ENCODE measurements at regions of chr22 and their contacts with region 1.

Region 1: DNA sequence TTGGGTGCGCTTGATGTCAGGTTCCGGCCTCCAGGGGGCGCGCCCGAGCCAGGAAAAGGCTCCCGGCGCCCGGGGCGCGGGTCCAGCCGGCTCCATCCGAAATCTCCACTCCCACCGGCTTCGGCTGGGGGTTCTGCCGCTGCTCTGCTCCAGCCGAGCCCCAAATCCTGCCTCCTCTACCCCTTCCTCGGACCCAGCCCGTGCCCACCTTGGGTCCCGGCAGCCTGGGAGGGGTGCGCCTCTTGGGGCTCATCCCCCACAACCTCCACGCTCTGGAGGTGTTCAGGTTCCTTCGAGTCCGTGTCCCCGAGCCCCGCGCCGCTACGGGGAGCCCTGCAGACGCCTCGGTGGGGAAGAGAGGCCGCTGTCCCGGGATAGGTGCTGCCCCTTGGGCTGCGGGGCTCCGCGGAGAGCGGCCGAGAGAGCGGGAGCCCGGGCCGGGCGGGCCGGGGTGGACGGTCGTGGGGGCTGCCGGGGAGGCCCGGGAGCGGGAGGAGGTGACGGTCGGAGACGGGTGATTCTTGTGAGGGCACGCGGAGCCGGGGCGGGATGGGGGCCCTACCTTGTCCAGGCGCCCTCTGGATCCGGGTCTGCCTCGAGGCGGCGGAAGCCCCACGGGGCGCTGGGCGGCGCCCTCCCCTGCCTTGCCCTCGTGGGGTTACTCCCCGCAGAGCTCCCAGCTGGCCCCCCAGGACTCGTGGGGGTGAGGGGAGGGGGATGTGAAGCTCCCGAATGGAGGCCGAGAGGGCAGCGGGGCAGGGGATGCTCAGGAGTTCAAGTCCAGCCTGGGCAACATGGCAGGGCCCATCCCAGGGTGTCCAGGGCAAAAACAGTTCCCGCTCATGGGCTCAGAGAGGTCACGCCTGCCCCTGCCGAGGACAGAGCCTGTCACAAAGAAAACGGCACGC is 13.2 kb upstream of the CYB5R3 start:
- DNase-seq: peak; percentile 91
- H3K4me3 ChIP-seq: peak overlapping the region; percentile 50
- H3K27ac ChIP-seq: no peak overlapping the region
- H3K4me1 ChIP-seq: no peaks in the 10 kb centered on the region
- H3K27me3 ChIP-seq: no peaks in the 10 kb centered on the region
- CTCF ChIP-seq: peak; percentile 69

Region 2: DNA sequence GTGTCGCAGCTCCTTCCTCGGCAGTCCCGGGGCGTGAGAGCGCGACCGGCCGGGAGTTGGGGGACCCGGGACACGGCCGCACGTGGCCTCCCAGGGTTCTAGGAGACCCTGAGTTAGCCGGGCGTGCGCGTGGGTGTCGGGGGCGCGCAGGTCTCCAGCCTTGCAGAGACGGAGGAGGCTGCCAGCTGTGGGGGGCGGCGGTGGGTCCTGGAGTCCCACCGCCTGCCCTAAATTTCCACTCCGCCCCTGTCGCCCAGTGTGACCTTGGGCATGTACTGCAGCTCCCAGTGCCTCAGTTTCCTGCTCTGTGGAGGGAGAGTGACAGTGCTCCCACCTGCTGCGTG is 161.6 kb before region 1 on chr22:
- intact Hi-C with region 1: no loop called
- DNase-seq: no peak
- H3K4me3 ChIP-seq: peak overlapping the region; percentile 37
- H3K27ac ChIP-seq: no peak overlapping the region
- H3K4me1 ChIP-seq: no peaks in the 10 kb centered on the region
- H3K27me3 ChIP-seq: no peaks in the 10 kb centered on the region
- CTCF ChIP-seq: no peak

Region 3: DNA sequence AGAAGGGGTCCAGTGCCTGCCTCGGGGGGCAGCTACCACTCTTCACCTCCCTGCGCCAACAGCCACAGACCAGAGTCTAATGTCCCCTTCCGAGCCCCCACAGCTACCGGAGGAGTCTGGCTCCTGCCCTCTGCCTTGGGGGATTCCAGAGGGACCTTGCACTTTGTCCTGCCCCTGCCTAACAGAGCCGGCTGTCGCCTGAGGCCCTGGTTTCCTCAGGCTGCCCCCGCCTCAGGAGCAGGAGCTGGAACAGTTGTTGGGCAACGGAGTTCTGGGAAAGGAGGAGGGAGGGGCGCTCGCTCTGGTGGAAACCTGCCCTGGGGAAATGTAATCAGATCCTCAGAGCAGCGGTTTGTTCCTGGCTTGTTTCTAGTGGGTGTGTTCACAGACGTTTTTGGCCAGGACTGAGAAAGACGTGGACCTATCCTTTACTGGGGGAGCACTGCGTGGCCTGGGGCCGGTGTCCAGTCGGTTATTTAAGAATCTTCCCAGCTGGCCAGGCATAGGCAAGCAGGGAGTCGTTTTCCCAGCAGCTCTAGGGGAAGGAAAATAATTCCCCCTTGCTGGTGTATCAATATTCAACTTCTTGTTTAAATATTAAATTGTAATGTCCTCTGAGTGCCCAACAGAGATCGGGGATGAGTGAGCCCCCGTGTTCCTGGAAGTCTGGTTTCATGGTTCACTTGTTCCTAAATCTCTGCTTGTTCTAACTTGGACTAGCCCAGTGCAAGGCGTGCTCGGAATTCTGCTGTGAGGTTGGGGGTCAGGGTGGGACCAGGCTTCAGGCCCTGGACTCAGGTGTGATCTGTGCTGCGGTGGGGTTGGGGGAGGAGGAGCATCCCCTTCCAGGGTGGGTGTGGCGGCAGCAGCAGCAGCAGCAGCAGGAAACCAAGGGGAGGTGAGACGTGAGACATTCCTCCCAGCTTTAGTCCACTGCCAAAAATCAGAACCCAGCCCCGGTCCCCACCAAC is 26.2 kb after region 1 on chr22:
- intact Hi-C with region 1: no loop called
- DNase-seq: peak; percentile 73
- H3K4me3 ChIP-seq: no peak overlapping the region
- H3K27ac ChIP-seq: peak overlapping the region; percentile 60
- H3K4me1 ChIP-seq: peaks cover 5% of the 10 kb centered on the region
- H3K27me3 ChIP-seq: no peaks in the 10 kb centered on the region
- CTCF ChIP-seq: no peak

Region 4: GRCh38 chr22:42769574-42770447 is 107.4 kb after region 1 on chr22:
- intact Hi-C with region 1: loop called (anchors 10 kb)
- DNase-seq: peak; percentile 41
- H3K4me3 ChIP-seq: no peak overlapping the region
- H3K27ac ChIP-seq: no peak overlapping the region
- H3K4me1 ChIP-seq: no peaks in the 10 kb centered on the region
- H3K27me3 ChIP-seq: no peaks in the 10 kb centered on the region
- CTCF ChIP-seq: no peak

Region 5: GRCh38 chr22:42820066-42820763 is 157.8 kb after region 1 on chr22:
- intact Hi-C with region 1: loop called (anchors 5 kb)
- DNase-seq: no peak
- H3K4me3 ChIP-seq: no peak overlapping the region
- H3K27ac ChIP-seq: no peak overlapping the region
- H3K4me1 ChIP-seq: no peaks in the 10 kb centered on the region
- H3K27me3 ChIP-seq: no peaks in the 10 kb centered on the region
- CTCF ChIP-seq: peak; percentile 64

Region 6: DNA sequence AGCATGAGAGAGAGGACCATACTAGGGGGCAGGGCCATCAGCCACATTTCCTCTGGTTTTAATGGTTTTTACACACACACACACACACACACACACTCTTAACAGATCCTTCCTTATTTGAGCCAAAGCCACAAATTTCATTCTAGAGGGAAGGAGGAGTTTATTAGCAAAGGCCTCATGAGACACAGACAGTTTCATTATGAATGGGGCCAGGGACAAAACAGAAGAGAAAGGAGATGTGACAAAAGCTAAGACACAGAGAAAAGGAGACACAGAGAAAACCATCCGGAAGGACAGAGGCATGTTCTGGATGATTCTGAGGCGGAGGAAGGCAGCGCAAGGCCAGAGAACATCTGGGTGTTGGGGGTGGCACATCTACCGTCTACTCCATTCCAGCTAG is 226.9 kb after region 1 on chr22:
- intact Hi-C with region 1: no loop called
- DNase-seq: no peak
- H3K4me3 ChIP-seq: no peak overlapping the region
- H3K27ac ChIP-seq: peak overlapping the region; percentile 24
- H3K4me1 ChIP-seq: peaks cover 8% of the 10 kb centered on the region
- H3K27me3 ChIP-seq: no peaks in the 10 kb centered on the region
- CTCF ChIP-seq: no peak